Calu3 (cell line): ENCODE measurements at regions of chr3 and their contacts with region 1.

Region 1: GRCh38 chr3:174862143-174862542 is 3.0 kb downstream of the NAALADL2 start:
- DNase-seq: peak; percentile 80
- H3K4me3 Mint-ChIP-seq: peak overlapping the region; percentile 83
- H3K27ac Mint-ChIP-seq: peak overlapping the region; percentile 71
- H3K4me1 Mint-ChIP-seq: peaks cover 53% of the 10 kb centered on the region
- H3K27me3 Mint-ChIP-seq: no peaks in the 10 kb centered on the region
- CTCF ChIP-seq: peak; percentile 81

Region 2: GRCh38 chr3:174397848-174398247 is 464.3 kb before region 1 on chr3:
- CTCF ChIA-PET with region 1: no interaction called
- intact Hi-C with region 1: loop called (anchors 1 kb)
- DNase-seq: no peak
- H3K4me3 Mint-ChIP-seq: no peak overlapping the region
- H3K27ac Mint-ChIP-seq: no peak overlapping the region
- H3K4me1 Mint-ChIP-seq: no peaks in the 10 kb centered on the region
- H3K27me3 Mint-ChIP-seq: no peaks in the 10 kb centered on the region
- CTCF ChIP-seq: peak; percentile 64

Region 3: DNA sequence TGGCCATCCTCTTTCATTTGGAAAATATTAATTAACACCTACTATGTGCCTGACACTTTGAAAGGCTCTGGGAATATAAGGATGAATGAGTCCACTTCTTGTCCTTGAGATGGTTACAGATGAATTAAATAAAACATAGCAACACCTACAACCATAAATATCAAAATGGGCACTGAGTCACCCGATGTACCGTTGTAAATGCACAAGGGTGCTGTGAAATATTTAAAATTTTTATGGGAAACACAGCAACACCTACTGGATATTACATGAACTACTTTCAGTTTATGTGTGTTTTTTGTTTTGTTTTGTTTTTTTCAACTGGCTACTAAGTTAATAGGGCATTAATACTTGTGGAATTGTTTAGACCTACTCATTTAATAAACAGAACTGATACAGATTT is 242.0 kb before region 1 on chr3:
- CTCF ChIA-PET with region 1: no interaction called
- intact Hi-C with region 1: loop called (anchors 5 kb)
- DNase-seq: no peak
- H3K4me3 Mint-ChIP-seq: no peak overlapping the region
- H3K27ac Mint-ChIP-seq: no peak overlapping the region
- H3K4me1 Mint-ChIP-seq: no peaks in the 10 kb centered on the region
- H3K27me3 Mint-ChIP-seq: no peaks in the 10 kb centered on the region
- CTCF ChIP-seq: no peak

Region 4: GRCh38 chr3:174973468-174973867 is 111.3 kb after region 1 on chr3:
- CTCF ChIA-PET with region 1: interaction called, 4 read pairs
- intact Hi-C with region 1: loop called (anchors 1 kb)
- DNase-seq: peak; percentile 82
- H3K4me3 Mint-ChIP-seq: no peak overlapping the region
- H3K27ac Mint-ChIP-seq: peak overlapping the region; percentile 81
- H3K4me1 Mint-ChIP-seq: peaks cover 25% of the 10 kb centered on the region
- H3K27me3 Mint-ChIP-seq: no peaks in the 10 kb centered on the region
- CTCF ChIP-seq: no peak

Region 5: GRCh38 chr3:175267121-175267531 is 405.0 kb after region 1 on chr3:
- CTCF ChIA-PET with region 1: no interaction called
- intact Hi-C with region 1: loop called (anchors 2 kb)
- DNase-seq: no peak
- H3K4me3 Mint-ChIP-seq: no peak overlapping the region
- H3K27ac Mint-ChIP-seq: peak overlapping the region; percentile 14
- H3K4me1 Mint-ChIP-seq: peaks cover 8% of the 10 kb centered on the region
- H3K27me3 Mint-ChIP-seq: no peaks in the 10 kb centered on the region
- CTCF ChIP-seq: no peak

Region 6: GRCh38 chr3:175737646-175738572 is 875.8 kb after region 1 on chr3:
- CTCF ChIA-PET with region 1: no interaction called
- intact Hi-C with region 1: loop called (anchors 5 kb)
- DNase-seq: peak; percentile 30
- H3K4me3 Mint-ChIP-seq: peak overlapping the region; percentile 8
- H3K27ac Mint-ChIP-seq: peak overlapping the region; percentile 83
- H3K4me1 Mint-ChIP-seq: peaks cover 54% of the 10 kb centered on the region
- H3K27me3 Mint-ChIP-seq: no peaks in the 10 kb centered on the region
- CTCF ChIP-seq: no peak

Region 7: GRCh38 chr3:176663837-176664831 is 1802.0 kb after region 1 on chr3:
- CTCF ChIA-PET with region 1: no interaction called
- intact Hi-C with region 1: loop called (anchors 2 kb)
- DNase-seq: peak; percentile 18
- H3K4me3 Mint-ChIP-seq: no peak overlapping the region
- H3K27ac Mint-ChIP-seq: no peak overlapping the region
- H3K4me1 Mint-ChIP-seq: peaks cover 9% of the 10 kb centered on the region
- H3K27me3 Mint-ChIP-seq: no peaks in the 10 kb centered on the region
- CTCF ChIP-seq: peak; percentile 21